ENCODE measurements at regions of chr5 and their contacts with region 1.

Region 1: GRCh38 chr5:71757590-71758543 is 38.8 kb downstream of the CARTPT start:
- DNase-seq: peak; percentile 33 to 59 (median 44)
- ATAC-seq: peak; percentile 98
- H3K4me3 ChIP-seq: no peak overlapping the region
- H3K27ac ChIP-seq: no peak overlapping the region
- H3K4me1 ChIP-seq: no peaks in the 10 kb centered on the region
- H3K27me3 ChIP-seq: peaks cover 0 to 2% of the 10 kb centered on the region in 2 experiments; a peak in 2 of 5 replicates
- CTCF ChIP-seq: peak; percentile 62 to 86 (median 79)
- EP300 ChIP-seq: no peak
- POLR2A ChIP-seq: no peak
- RAD21 ChIP-seq: peak; percentile 82 to 86

Region 2: GRCh38 chr5:71475788-71476384 is 282.0 kb before region 1 on chr5:
- CTCF ChIA-PET with region 1: no interaction called
- POLR2A ChIA-PET with region 1: no interaction called
- in situ Hi-C with region 1: no loop called
- intact Hi-C with region 1: loop called (anchors 10 kb)
- DNase-seq: peak; percentile 14 to 59 (median 49)
- ATAC-seq: peak; percentile 89
- H3K4me3 ChIP-seq: no peak overlapping the region
- H3K27ac ChIP-seq: no peak overlapping the region
- H3K4me1 ChIP-seq: no peaks in the 10 kb centered on the region
- H3K27me3 ChIP-seq: no peaks in the 10 kb centered on the region
- CTCF ChIP-seq: peak; percentile 34 to 67 (median 58); a peak in 5 of 6 replicates
- EP300 ChIP-seq: no peak
- POLR2A ChIP-seq: no peak
- RAD21 ChIP-seq: peak in 1 of 2 experiments; percentile 36; a peak in 2 of 4 replicates

Region 3: GRCh38 chr5:71573592-71573991 is 184.3 kb before region 1 on chr5:
- CTCF ChIA-PET with region 1: no interaction called
- POLR2A ChIA-PET with region 1: no interaction called
- in situ Hi-C with region 1: no loop called
- intact Hi-C with region 1: loop called (anchors 2 kb)
- DNase-seq: peak in 1 of 4 experiments; percentile 20
- ATAC-seq: peak; percentile 43; the same call in 1 of the 3 replicates
- H3K4me3 ChIP-seq: no peak overlapping the region
- H3K27ac ChIP-seq: no peak overlapping the region
- H3K4me1 ChIP-seq: peaks cover 0 to 5% of the 10 kb centered on the region in 2 experiments; a peak in 2 of 5 replicates
- H3K27me3 ChIP-seq: no peaks in the 10 kb centered on the region
- CTCF ChIP-seq: peak in 1 of 3 experiments; percentile 47; a peak in 2 of 6 replicates
- EP300 ChIP-seq: no peak
- POLR2A ChIP-seq: no peak
- RAD21 ChIP-seq: peak in 1 of 2 experiments; percentile 53; a peak in 2 of 4 replicates

Region 4: GRCh38 chr5:71658916-71659662 is 98.8 kb before region 1 on chr5:
- CTCF ChIA-PET with region 1: no interaction called
- POLR2A ChIA-PET with region 1: no interaction called
- in situ Hi-C with region 1: no loop called
- intact Hi-C with region 1: loop called (anchors 2 kb)
- DNase-seq: peak; percentile 12 to 36 (median 26)
- ATAC-seq: no peak
- H3K4me3 ChIP-seq: no peak overlapping the region
- H3K27ac ChIP-seq: no peak overlapping the region
- H3K4me1 ChIP-seq: no peaks in the 10 kb centered on the region
- H3K27me3 ChIP-seq: peaks cover 2 to 4% of the 10 kb centered on the region in 2 experiments; a peak in 2 of 5 replicates
- CTCF ChIP-seq: peak; percentile 26 to 50 (median 34); a peak in 3 of 6 replicates
- EP300 ChIP-seq: no peak
- POLR2A ChIP-seq: no peak
- RAD21 ChIP-seq: peak; percentile 15 to 41; a peak in 2 of 4 replicates

Measured in K562 (cell line).